ENCODE measurements at regions of chr5 and their contacts with region 1.

Region 1: DNA sequence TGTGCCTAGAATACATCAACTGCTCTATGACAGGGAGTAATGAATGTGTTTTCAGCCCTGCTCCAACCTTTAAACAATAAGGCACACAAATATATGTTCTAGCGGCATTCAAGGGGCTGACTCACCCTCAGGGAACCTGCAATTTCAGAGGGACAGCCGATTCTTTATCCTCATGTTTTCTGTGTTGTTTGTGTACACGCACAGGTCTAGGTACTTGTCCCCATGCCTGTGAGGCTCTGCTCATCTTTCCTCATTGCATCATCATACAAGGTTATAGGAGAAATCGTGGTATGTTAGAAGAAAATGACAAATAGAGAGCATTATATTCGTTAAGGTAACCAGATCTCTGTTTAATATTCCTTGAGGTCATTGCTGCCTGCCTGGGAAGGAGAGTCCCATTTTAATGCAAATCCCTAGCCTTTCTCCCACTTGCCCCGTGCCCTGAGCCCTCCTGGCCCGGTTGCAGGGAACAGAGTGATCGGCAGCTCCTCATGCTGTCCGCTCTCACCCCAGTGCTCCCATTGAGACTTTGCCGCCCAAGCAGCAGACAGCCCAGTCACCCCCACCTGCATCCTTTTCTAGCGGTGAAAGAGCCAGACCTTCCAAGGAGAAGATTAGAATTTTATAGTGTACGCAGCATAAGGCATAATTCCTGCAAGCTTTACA is 14.6 kb downstream of the MAP1B start:
- DNase-seq: no peak
- H3K4me3 ChIP-seq: no peak overlapping the region
- H3K27ac ChIP-seq: peak overlapping the region in 1 of 4 donors; percentile 1
- H3K4me1 ChIP-seq: peaks cover 5 to 66% (median 58%) of the 10 kb centered on the region in 4 donors
- H3K27me3 ChIP-seq: no peaks in the 10 kb centered on the region
- CTCF ChIP-seq: no peak
- EP300 ChIP-seq: no peak
- POLR2A ChIP-seq: no peak

Region 2: GRCh38 chr5:72156946-72157624 is 35.2 kb after region 1 on chr5:
- intact Hi-C with region 1: no loop called
- DNase-seq: no peak
- H3K4me3 ChIP-seq: no peak overlapping the region
- H3K27ac ChIP-seq: peak overlapping the region; percentile 58 to 85 (median 71)
- H3K4me1 ChIP-seq: peaks cover 39 to 100% (median 94%) of the 10 kb centered on the region in 4 donors
- H3K27me3 ChIP-seq: no peaks in the 10 kb centered on the region
- CTCF ChIP-seq: no peak
- EP300 ChIP-seq: no peak
- POLR2A ChIP-seq: no peak

Region 3: GRCh38 chr5:72179816-72180440 is 58.0 kb after region 1 on chr5:
- intact Hi-C with region 1: loop called (anchors 5 kb)
- DNase-seq: no peak
- H3K4me3 ChIP-seq: peak overlapping the region; percentile 41 to 55 (median 46)
- H3K27ac ChIP-seq: peak overlapping the region; percentile 73 to 86 (median 85)
- H3K4me1 ChIP-seq: peaks cover 9 to 83% (median 67%) of the 10 kb centered on the region in 4 donors
- H3K27me3 ChIP-seq: no peaks in the 10 kb centered on the region
- CTCF ChIP-seq: no peak
- EP300 ChIP-seq: no peak
- POLR2A ChIP-seq: no peak

Measured in esophagus muscularis mucosa (tissue), 4 donors.